GM12878 (cell line): ENCODE measurements at regions of chr4 and their contacts with region 1.

Region 1: GRCh38 chr4:168076989-168077725 is 15.2 kb upstream of the ANXA10 start:
- DNase-seq: peak; percentile 16
- ATAC-seq: peak; percentile 85
- H3K4me3 ChIP-seq: no peak overlapping the region
- H3K27ac ChIP-seq: no peak overlapping the region
- H3K4me1 ChIP-seq: no peaks in the 10 kb centered on the region
- H3K27me3 ChIP-seq: no peaks in the 10 kb centered on the region
- CTCF ChIP-seq: peak; percentile 80 to 91 (median 86)
- EP300 ChIP-seq: no peak
- POLR2A ChIP-seq: no peak
- RAD21 ChIP-seq: peak; percentile 92

Region 2: DNA sequence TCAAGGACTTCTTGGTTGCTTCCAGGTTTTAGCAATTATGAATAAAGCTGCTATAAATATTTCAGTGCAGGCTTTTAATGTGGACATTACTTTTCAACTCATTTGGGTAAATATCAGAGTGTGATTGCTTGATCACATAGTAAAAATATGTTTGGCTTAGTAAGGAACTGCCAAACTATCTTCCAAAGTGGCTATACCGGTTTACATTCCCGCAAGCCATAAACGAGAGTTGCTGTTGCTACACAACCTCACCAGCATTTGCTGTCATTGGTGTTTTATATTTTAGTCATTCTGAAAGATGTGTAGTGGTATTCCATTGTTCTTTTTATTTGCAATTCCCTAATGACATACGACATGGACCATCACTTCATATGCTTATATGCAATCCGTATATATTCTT is 811.9 kb before region 1 on chr4:
- CTCF ChIA-PET with region 1: no interaction called
- POLR2A ChIA-PET with region 1: no interaction called
- RAD21 ChIA-PET with region 1: no interaction called
- SMC1A ChIA-PET with region 1: no interaction called
- in situ Hi-C with region 1: no loop called
- intact Hi-C with region 1: no loop called
- DNase-seq: no peak
- ATAC-seq: no peak
- H3K4me3 ChIP-seq: no peak overlapping the region
- H3K27ac ChIP-seq: no peak overlapping the region
- H3K4me1 ChIP-seq: no peaks in the 10 kb centered on the region
- H3K27me3 ChIP-seq: no peaks in the 10 kb centered on the region
- CTCF ChIP-seq: no peak
- EP300 ChIP-seq: no peak
- POLR2A ChIP-seq: no peak
- RAD21 ChIP-seq: no peak

Region 3: DNA sequence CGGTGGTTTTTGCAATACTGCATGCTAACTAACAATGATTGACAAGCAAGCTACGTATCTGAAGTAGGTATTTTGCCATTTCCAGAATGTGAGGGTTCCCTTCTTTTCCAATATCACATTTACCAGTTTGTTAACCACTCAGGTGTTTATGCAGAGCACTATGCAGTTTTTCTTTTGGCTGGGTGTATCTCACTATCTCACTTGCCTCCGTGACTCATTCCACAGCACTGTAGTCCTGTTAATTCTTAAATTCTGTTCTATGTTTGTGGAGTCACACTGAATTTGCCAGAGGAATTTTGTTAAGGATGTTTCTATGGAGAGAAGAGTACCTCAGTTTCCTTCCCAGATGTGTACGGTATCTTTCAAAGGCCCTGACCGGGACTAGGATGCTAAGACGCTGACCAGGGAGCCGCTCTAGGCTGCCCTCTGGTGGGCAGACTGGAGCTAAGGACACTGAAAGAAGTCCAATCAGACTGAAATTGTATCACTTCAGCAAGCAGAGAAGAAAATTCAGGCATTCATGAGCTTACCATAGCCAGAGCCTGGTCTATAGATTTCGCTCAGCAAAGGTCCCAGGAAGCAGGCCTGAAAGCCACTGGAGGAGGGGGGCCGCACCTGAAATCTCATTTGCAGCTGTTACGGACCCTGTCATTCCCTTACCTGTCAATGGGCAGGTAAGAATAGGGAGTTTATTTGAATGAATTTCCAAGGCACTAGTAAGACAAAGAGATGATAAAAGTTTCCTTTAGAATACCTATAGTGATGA is 454.5 kb before region 1 on chr4:
- CTCF ChIA-PET with region 1: interaction called, 4 read pairs
- POLR2A ChIA-PET with region 1: no interaction called
- RAD21 ChIA-PET with region 1: no interaction called
- SMC1A ChIA-PET with region 1: interaction called, 3 read pairs
- in situ Hi-C with region 1: no loop called
- intact Hi-C with region 1: loop called (anchors 5 kb)
- DNase-seq: no peak
- ATAC-seq: peak; percentile 99
- H3K4me3 ChIP-seq: no peak overlapping the region
- H3K27ac ChIP-seq: no peak overlapping the region
- H3K4me1 ChIP-seq: no peaks in the 10 kb centered on the region
- H3K27me3 ChIP-seq: no peaks in the 10 kb centered on the region
- CTCF ChIP-seq: peak; percentile 63 to 82 (median 81)
- EP300 ChIP-seq: no peak
- POLR2A ChIP-seq: no peak
- RAD21 ChIP-seq: peak; percentile 70

Region 4: GRCh38 chr4:167989815-167990214 is 87.3 kb before region 1 on chr4:
- CTCF ChIA-PET with region 1: interaction called, 5 read pairs
- POLR2A ChIA-PET with region 1: no interaction called
- RAD21 ChIA-PET with region 1: interaction called, 3 read pairs
- SMC1A ChIA-PET with region 1: interaction called, 4 read pairs
- in situ Hi-C with region 1: no loop called
- intact Hi-C with region 1: loop called (anchors 5 kb)
- DNase-seq: no peak
- ATAC-seq: no peak
- H3K4me3 ChIP-seq: no peak overlapping the region
- H3K27ac ChIP-seq: no peak overlapping the region
- H3K4me1 ChIP-seq: no peaks in the 10 kb centered on the region
- H3K27me3 ChIP-seq: no peaks in the 10 kb centered on the region
- CTCF ChIP-seq: no peak; a peak in 1 of 6 replicates
- EP300 ChIP-seq: no peak
- POLR2A ChIP-seq: no peak
- RAD21 ChIP-seq: no peak

Region 5: GRCh38 chr4:168092176-168092712 is 15.1 kb after region 1 on chr4 and contains the start of gene ANXA10:
- CTCF ChIA-PET with region 1: no interaction called
- POLR2A ChIA-PET with region 1: no interaction called
- RAD21 ChIA-PET with region 1: no interaction called
- SMC1A ChIA-PET with region 1: no interaction called
- in situ Hi-C with region 1: no loop called
- intact Hi-C with region 1: no loop called
- DNase-seq: no peak
- ATAC-seq: no peak
- H3K4me3 ChIP-seq: no peak within 1 kb of the TSS
- H3K27ac ChIP-seq: no peak within 1 kb of the TSS
- H3K4me1 ChIP-seq: no peaks in the 10 kb centered on the region
- H3K27me3 ChIP-seq: no peaks in the 10 kb centered on the region
- CTCF ChIP-seq: no peak
- EP300 ChIP-seq: no peak
- POLR2A ChIP-seq: no peak
- RAD21 ChIP-seq: no peak
- polyA plus RNA-seq, gene ANXA10: not detected

Region 6: DNA sequence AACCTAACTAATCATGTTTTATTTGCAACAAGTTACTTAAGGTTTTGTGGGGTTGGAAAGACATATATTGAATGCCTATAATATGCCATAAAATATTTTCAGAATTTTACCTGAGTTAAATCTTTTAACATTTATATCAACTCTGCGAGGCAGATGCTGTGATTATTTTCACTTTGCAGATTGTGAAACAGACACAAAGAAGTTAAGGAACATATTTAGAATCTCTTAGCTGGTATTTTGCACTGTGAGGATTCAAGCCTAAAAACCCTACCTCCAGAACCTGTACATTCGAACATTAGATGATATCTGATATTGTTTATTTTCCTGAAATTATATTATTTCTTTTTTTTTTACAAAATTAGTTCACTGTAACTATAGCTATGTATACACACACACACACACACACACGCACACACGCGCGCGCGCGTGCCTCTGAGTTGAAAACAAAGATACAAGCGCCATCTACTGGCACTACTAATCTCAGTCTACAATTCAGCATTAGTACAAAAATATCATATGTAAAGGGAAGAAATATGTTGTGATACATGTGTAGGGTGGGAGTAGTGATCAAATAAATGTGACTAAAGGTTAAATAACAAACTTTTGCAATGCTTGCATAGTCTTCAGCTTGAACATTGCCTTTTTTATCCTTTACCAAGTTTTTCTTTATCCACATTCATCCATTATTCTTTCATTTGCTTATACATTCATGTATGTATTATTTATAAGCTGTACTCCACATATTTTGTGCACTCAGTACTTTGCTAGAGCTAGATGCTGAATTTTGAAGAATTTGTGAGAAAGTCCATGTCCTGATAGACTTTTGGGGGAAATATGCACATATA is 76.7 kb after region 1 on chr4:
- CTCF ChIA-PET with region 1: interaction called, 7 read pairs
- POLR2A ChIA-PET with region 1: no interaction called
- RAD21 ChIA-PET with region 1: interaction called, 3 read pairs
- SMC1A ChIA-PET with region 1: interaction called, 4 read pairs
- in situ Hi-C with region 1: no loop called
- intact Hi-C with region 1: loop called (anchors 2 kb)
- DNase-seq: peak; percentile 4
- ATAC-seq: peak; percentile 95
- H3K4me3 ChIP-seq: no peak overlapping the region
- H3K27ac ChIP-seq: no peak overlapping the region
- H3K4me1 ChIP-seq: no peaks in the 10 kb centered on the region
- H3K27me3 ChIP-seq: no peaks in the 10 kb centered on the region
- CTCF ChIP-seq: peak; percentile 56 to 71 (median 62)
- EP300 ChIP-seq: no peak
- POLR2A ChIP-seq: no peak
- RAD21 ChIP-seq: peak; percentile 63